Activated CD4-positive, alpha-beta T cell treated with anti-CD3 and anti-CD28 coated beads for 36 hours (primary cell): ENCODE measurements at regions of chr9 and their contacts with region 1.

Region 1: GRCh38 chr9:104991144-104991953 is 63.4 kb upstream of the ABCA1 start:
- DNase-seq: peak; percentile 93
- ATAC-seq: peak; percentile 73
- H3K4me3 Mint-ChIP-seq: peak overlapping the region; percentile 80
- H3K27ac Mint-ChIP-seq: peak overlapping the region; percentile 98
- H3K4me1 Mint-ChIP-seq: peaks cover 37% of the 10 kb centered on the region
- H3K27me3 Mint-ChIP-seq: peaks cover 29% of the 10 kb centered on the region

Region 2: DNA sequence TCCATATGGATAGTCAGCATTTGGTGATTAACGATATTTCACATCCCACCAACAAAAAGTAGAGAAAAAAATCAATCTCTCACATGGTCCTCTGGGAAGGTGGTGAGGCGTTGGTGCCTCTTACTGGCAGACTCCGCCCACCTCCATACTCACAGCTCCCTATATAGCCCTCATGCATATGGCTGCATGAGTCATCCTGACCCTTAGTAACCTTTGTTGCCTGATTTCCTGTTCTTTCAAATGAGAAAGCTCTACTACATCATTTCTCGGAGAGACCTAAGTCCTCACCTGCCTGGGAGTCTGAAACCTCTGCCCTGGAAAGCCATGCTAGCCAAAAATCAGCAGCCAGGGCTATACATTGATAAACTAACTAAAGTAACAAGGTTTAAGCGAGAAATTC is 30.1 kb before region 1 on chr9:
- CTCF ChIA-PET with region 1: no interaction called
- POLR2A ChIA-PET with region 1: interaction called, 4 read pairs
- intact Hi-C with region 1: loop called (anchors 1 kb)
- DNase-seq: peak; percentile 86
- ATAC-seq: peak; percentile 100
- H3K4me3 Mint-ChIP-seq: peak overlapping the region; percentile 18
- H3K27ac Mint-ChIP-seq: peak overlapping the region; percentile 91
- H3K4me1 Mint-ChIP-seq: peaks cover 32% of the 10 kb centered on the region
- H3K27me3 Mint-ChIP-seq: no peaks in the 10 kb centered on the region

Region 3: DNA sequence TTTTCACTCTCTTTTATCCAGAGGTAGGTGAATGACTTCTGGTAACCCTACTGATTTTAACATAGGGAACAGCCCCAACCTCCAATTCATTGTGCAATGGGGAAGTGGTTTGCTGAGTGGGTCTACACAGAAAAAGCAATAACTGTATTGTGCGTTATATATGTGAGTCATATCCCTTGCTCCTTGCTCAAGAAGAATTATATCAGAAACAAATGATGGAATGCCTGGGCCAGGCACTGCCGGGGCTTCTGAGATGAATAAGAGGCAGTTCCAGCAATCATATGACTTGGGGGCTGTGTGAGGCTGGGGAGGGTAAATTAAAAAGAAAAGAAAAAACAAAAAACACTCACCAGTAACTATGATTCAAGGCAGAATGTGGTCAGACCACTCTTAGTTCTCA is 15.8 kb after region 1 on chr9:
- CTCF ChIA-PET with region 1: interaction called, 4 read pairs
- POLR2A ChIA-PET with region 1: no interaction called
- intact Hi-C with region 1: loop called in 1 of 2 experiments (anchors 1 kb)
- DNase-seq: peak; percentile 56
- ATAC-seq: peak; percentile 88
- H3K4me3 Mint-ChIP-seq: no peak overlapping the region
- H3K27ac Mint-ChIP-seq: peak overlapping the region; percentile 4
- H3K4me1 Mint-ChIP-seq: peaks cover 10% of the 10 kb centered on the region
- H3K27me3 Mint-ChIP-seq: peaks cover 2% of the 10 kb centered on the region

Region 4: GRCh38 chr9:105069696-105070095 is 78.3 kb after region 1 on chr9:
- CTCF ChIA-PET with region 1: no interaction called
- POLR2A ChIA-PET with region 1: no interaction called
- intact Hi-C with region 1: loop called in 1 of 2 experiments (anchors 5 kb)
- DNase-seq: no peak
- ATAC-seq: no peak
- H3K4me3 Mint-ChIP-seq: no peak overlapping the region
- H3K27ac Mint-ChIP-seq: no peak overlapping the region
- H3K4me1 Mint-ChIP-seq: peaks cover 5% of the 10 kb centered on the region
- H3K27me3 Mint-ChIP-seq: no peaks in the 10 kb centered on the region

Region 5: GRCh38 chr9:105157130-105157583 is 165.8 kb after region 1 on chr9:
- CTCF ChIA-PET with region 1: no interaction called
- POLR2A ChIA-PET with region 1: no interaction called
- intact Hi-C with region 1: loop called (anchors 5 to 10 kb)
- DNase-seq: peak; percentile 46
- ATAC-seq: peak; percentile 86
- H3K4me3 Mint-ChIP-seq: no peak overlapping the region
- H3K27ac Mint-ChIP-seq: no peak overlapping the region
- H3K4me1 Mint-ChIP-seq: peaks cover 14% of the 10 kb centered on the region
- H3K27me3 Mint-ChIP-seq: no peaks in the 10 kb centered on the region

Region 6: DNA sequence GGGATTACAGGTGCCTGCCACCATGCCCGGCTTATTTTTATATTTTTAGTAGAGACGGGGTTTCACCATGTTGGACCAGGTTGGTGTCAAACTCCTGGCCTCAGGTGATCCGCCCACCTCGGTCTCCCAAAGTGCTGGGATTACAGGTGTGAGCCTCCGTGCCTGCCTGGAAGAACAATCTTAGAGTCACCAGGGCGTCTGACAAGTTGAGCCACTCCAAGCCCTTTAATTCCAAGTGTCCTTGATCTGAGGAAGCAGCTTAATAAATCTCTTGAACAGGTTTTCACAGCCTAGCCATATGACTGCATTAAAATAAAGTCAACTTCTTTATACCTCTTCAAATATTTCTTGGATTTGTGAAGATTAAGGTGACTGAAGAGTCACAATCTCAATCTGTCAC is 284.6 kb after region 1 on chr9:
- CTCF ChIA-PET with region 1: no interaction called
- POLR2A ChIA-PET with region 1: no interaction called
- intact Hi-C with region 1: no loop called
- DNase-seq: no peak
- ATAC-seq: no peak
- H3K4me3 Mint-ChIP-seq: no peak overlapping the region
- H3K27ac Mint-ChIP-seq: no peak overlapping the region
- H3K4me1 Mint-ChIP-seq: peaks cover 4% of the 10 kb centered on the region
- H3K27me3 Mint-ChIP-seq: no peaks in the 10 kb centered on the region

Region 7: DNA sequence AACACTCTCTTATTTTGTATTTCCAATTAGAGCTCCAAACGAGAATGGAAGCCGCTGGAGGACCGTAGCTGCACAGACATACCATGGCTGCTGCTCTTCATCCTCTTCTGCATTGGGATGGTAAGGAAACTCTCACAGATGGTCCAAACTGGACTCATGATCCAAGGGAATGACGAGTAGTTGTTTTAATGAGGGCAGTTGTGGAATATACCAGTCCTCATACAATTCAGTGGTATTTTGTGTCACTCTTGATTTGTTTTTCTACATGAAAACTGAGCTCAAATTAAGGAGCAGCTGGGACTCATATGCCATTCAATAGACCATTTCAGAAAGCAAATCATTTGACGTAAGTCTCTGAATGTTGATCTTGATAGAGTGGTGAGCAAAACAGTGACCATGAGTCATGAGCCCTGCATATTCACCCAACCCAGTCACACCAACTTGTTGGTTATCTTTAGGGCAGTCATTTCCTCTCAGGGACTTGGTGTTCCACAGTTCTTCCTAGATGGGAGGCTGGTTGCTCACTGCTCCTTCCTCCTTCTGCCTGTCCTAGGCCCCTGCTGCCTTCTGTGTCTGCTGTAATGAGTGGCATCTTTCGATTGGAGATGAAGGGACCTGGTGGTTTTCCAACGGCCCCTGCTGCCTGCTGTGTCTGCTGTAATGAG is 308.0 kb after region 1 on chr9:
- CTCF ChIA-PET with region 1: no interaction called
- POLR2A ChIA-PET with region 1: no interaction called
- intact Hi-C with region 1: no loop called
- DNase-seq: peak; percentile 34
- ATAC-seq: peak; percentile 80
- H3K4me3 Mint-ChIP-seq: no peak overlapping the region
- H3K27ac Mint-ChIP-seq: no peak overlapping the region
- H3K4me1 Mint-ChIP-seq: peaks cover 14% of the 10 kb centered on the region
- H3K27me3 Mint-ChIP-seq: no peaks in the 10 kb centered on the region